Activated B cell treated with CpG ODN at 0.5 μM for 24 hours (primary cell): ENCODE measurements at regions of chr9 and their contacts with region 1.

Region 1: DNA sequence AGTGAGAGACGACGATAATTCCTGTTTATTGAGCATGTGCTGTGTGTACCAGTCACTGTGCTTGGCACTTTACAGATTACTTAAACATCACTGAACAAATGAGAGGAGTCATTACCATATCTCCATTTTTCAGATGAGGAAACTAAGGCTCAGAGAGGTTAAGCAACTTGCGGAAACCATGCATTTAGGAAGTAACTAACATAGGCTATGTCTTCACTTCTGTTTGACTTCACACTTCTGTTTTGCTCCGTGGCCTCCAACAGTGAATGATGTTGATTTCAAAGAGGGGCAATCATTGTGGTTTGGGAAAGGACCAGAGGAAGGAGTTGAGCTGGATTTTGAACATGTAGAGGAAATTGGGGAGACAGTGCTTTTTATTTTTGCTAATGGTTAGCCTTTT is 16.7 kb downstream of the GCNT1 start:
- DNase-seq: no peak
- ATAC-seq: no peak
- H3K4me3 Mint-ChIP-seq: no peak overlapping the region
- H3K27ac Mint-ChIP-seq: no peak overlapping the region
- H3K4me1 Mint-ChIP-seq: peaks cover 67% of the 10 kb centered on the region
- H3K27me3 Mint-ChIP-seq: peaks cover 5% of the 10 kb centered on the region
- CTCF ChIP-seq: no peak

Region 2: DNA sequence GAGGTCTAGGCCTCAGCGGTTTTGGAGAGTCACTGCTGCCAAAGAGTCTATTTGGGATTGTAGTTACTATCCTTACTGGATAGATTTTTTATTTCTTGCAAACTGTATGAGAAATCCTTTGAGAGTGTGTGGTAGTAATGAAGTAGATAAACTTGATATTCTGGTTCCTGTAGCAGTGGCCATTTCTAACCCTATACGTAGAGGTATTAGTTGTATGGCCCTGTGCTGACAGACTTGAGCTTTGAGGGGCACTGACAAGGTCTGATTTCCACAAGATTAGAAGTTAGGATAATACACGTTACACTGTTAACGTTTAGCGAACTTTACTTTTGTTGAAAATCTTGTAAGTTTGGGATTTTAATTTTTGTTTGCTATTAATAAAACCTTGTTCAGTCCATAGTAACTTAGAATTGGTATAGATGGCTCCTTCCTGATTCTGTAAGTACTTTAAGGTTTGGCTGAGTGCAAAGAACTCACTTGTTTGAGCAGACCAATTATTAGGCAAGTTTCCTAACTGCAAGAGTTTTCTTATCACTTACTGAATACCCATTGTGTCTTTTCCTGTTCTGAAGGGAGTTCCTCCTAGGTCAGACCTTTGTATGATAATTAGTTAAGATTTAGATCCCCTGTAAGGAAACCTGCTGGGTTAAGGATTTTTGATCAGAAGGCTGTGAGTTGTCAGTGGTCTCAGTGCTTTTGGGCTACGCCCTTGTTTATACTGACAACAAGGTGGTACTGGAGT is 14.7 kb after region 1 on chr9:
- CTCF ChIA-PET with region 1: interaction called, 3 read pairs
- POLR2A ChIA-PET with region 1: no interaction called
- intact Hi-C with region 1: loop called (anchors 2 kb)
- DNase-seq: no peak
- ATAC-seq: no peak
- H3K4me3 Mint-ChIP-seq: no peak overlapping the region
- H3K27ac Mint-ChIP-seq: no peak overlapping the region
- H3K4me1 Mint-ChIP-seq: peaks cover 56% of the 10 kb centered on the region
- H3K27me3 Mint-ChIP-seq: no peaks in the 10 kb centered on the region
- CTCF ChIP-seq: no peak

Region 3: DNA sequence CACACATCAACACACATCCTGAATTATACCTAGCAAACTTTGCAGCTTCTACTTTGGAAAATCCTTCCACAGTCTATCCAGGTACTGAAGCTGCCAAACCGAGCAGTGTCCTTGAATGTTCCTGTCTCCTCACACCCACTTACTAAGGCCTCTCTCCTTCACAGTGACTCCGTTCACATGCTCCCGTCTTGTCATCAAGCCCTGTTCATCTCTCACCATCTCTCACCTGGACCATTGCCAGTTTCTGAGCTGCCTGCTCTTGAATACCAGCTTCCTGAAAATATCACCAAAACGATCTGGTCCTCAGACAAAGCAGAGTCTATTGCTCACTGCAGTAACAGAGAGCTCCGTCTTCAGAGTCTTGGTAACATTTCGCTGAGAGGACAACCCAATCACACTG is 40.7 kb after region 1 on chr9:
- CTCF ChIA-PET with region 1: no interaction called
- POLR2A ChIA-PET with region 1: no interaction called
- intact Hi-C with region 1: loop called (anchors 5 kb)
- DNase-seq: no peak
- ATAC-seq: no peak
- H3K4me3 Mint-ChIP-seq: no peak overlapping the region
- H3K27ac Mint-ChIP-seq: no peak overlapping the region
- H3K4me1 Mint-ChIP-seq: peaks cover 5% of the 10 kb centered on the region
- H3K27me3 Mint-ChIP-seq: peaks cover under 1% of the 10 kb centered on the region
- CTCF ChIP-seq: no peak

Region 4: DNA sequence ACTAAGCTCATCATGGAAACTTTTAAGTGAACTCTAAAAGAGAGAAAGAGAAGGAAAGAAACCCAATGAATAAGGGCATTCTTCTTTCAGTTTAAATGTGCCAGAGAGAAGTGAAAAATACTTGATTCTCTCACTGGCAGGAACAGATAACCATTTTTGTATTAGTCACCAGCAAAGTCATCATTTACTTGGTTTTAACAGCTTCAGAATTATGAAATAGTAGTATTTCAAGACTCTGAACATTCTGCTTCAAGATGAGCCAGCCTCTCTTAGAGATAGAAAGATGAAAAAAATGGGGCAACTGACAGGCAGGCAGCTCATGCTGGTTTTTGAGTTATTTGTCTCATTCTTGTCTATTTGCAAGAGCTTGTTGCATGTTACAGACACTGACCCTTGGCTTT is 86.8 kb after region 1 on chr9:
- CTCF ChIA-PET with region 1: no interaction called
- POLR2A ChIA-PET with region 1: interaction called, 7 read pairs
- intact Hi-C with region 1: loop called (anchors 5 kb)
- DNase-seq: no peak
- ATAC-seq: peak; percentile 57
- H3K4me3 Mint-ChIP-seq: peak overlapping the region; percentile 55
- H3K27ac Mint-ChIP-seq: peak overlapping the region; percentile 65
- H3K4me1 Mint-ChIP-seq: peaks cover 63% of the 10 kb centered on the region
- H3K27me3 Mint-ChIP-seq: no peaks in the 10 kb centered on the region
- CTCF ChIP-seq: no peak

Region 5: DNA sequence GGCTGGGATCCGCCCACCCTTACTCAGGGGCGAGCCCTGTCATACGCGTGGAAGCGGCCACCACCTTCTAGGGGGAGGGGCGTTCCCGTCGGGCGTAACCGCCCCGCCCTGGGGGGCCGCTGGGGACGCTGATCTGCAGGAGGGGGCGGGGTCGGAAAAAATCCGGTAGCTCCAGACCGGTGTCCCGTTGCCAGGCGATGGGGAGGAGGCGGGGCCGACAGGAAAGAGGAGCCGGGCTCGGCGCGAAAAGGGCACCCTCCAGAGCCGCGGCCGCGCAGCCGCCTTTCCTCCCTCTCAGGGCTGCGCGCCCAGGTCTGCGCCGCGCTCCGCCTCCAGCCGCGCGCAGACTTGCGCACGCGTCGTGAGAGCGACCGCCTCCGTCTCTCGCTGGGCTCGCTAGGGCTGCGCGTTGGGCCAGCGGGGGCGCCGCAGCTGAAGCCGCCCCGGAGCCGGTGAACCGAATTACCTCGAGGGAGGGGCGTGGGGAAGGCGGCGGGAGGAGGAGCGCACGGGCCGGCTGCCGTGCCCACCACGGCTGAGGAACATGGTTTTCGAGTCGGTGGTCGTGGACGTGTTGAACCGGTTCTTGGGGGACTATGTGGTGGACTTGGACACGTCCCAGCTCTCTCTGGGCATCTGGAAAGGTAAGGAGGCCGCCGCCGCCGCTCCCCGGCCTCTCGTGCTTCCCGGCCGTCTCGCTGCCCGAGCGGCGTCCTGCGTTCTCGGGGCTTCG is 701.6 kb after region 1 on chr9 and contains the start of gene VPS13A:
- CTCF ChIA-PET with region 1: no interaction called
- POLR2A ChIA-PET with region 1: no interaction called
- intact Hi-C with region 1: loop called (anchors 5 kb)
- DNase-seq: peak; percentile 92
- ATAC-seq: peak; percentile 82
- H3K4me3 Mint-ChIP-seq: peak within 1 kb of the TSS; percentile 92
- H3K27ac Mint-ChIP-seq: peak within 1 kb of the TSS; percentile 83
- H3K4me1 Mint-ChIP-seq: peaks cover 29% of the 10 kb centered on the region
- H3K27me3 Mint-ChIP-seq: no peaks in the 10 kb centered on the region
- CTCF ChIP-seq: no peak
- total RNA-seq, gene VPS13A: 58.0 and 69.8 TPM in 2 replicates